ENCODE measurements at regions of chr3 and their contacts with region 1.

Region 1: GRCh38 chr3:48739955-48740823 is 23.2 kb upstream of the IP6K2 start:
- DNase-seq: peak; percentile 95
- H3K4me3 ChIP-seq: no peak overlapping the region
- H3K27ac ChIP-seq: peak overlapping the region; percentile 58 to 70 (median 68)
- H3K4me1 ChIP-seq: peaks cover 0 to 43% (median 30%) of the 10 kb centered on the region in 4 donors
- H3K27me3 ChIP-seq: no peaks in the 10 kb centered on the region
- CTCF ChIP-seq: peak; percentile 70 to 88 (median 82)
- EP300 ChIP-seq: no peak
- POLR2A ChIP-seq: no peak

Region 2: GRCh38 chr3:47701388-47701787 is 1038.8 kb before region 1 on chr3:
- intact Hi-C with region 1: no loop called
- DNase-seq: no peak
- H3K4me3 ChIP-seq: no peak overlapping the region
- H3K27ac ChIP-seq: no peak overlapping the region
- H3K4me1 ChIP-seq: peaks cover 0 to 4% (median 0%) of the 10 kb centered on the region in 4 donors
- H3K27me3 ChIP-seq: no peaks in the 10 kb centered on the region
- CTCF ChIP-seq: no peak
- EP300 ChIP-seq: no peak
- POLR2A ChIP-seq: no peak

Region 3: DNA sequence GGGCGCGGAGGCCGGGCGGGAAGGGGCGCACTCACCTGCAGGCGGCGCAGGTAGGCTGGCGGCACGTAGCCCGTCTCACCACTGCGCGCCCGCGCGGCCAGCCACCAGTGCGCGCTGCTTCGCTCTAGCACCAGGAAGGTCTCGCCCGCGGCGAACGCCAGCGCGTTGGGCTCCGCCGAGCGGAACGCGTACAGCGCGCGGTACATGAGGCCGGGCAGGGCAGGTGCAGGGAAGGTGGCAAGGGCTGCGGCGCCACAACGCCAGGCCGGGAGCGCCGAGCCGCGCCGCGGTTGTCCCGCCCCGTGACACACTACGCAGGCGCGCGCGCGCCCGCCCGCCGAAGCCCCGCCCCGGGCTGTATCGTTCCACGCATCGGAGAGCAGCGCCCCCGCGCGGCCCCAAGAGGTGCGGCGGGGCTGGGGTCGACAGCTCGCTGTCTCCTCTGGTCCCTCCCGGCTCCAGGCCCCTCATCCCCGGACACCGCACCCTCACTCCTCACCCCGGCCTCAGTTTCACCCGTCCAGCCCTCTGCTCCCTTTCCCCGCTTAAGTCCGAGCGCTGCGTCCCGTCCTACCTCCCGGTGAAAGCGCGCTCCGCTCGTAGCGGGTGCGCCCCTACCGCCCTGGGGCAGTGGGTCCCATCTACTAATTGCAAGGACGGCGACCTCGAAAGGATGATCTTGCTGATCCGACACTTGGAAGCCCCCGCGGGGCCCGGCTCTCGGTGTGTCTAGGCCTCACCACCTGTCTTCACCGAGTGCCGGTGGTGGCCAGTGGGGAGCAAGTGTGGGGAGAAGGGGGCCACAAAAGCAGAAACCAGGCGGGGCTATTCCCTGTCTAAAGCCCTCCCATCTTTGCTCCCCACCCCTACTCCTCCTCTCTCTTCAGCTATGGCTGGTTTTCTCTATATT is 54.3 kb before region 1 on chr3 and contains the start of gene NCKIPSD:
- intact Hi-C with region 1: loop called (anchors 2 kb)
- DNase-seq: peak; percentile 93
- H3K4me3 ChIP-seq: peak within 1 kb of the TSS; percentile 65 to 94 (median 80)
- H3K27ac ChIP-seq: peak within 1 kb of the TSS; percentile 77 to 85 (median 80)
- H3K4me1 ChIP-seq: peaks cover 0 to 45% (median 36%) of the 10 kb centered on the region in 4 donors
- H3K27me3 ChIP-seq: no peaks in the 10 kb centered on the region
- CTCF ChIP-seq: peak; percentile 56 to 89 (median 81)
- EP300 ChIP-seq: no peak
- POLR2A ChIP-seq: peak in 1 of 2 donors; percentile 30
- total RNA-seq, gene NCKIPSD: 7.7 to 29.3 (median 22.8) TPM

Region 4: GRCh38 chr3:48723725-48724124 is 16.5 kb before region 1 on chr3:
- intact Hi-C with region 1: no loop called
- DNase-seq: no peak
- H3K4me3 ChIP-seq: no peak overlapping the region
- H3K27ac ChIP-seq: no peak overlapping the region
- H3K4me1 ChIP-seq: no peaks in the 10 kb centered on the region
- H3K27me3 ChIP-seq: no peaks in the 10 kb centered on the region
- CTCF ChIP-seq: no peak
- EP300 ChIP-seq: no peak
- POLR2A ChIP-seq: no peak

Region 5: DNA sequence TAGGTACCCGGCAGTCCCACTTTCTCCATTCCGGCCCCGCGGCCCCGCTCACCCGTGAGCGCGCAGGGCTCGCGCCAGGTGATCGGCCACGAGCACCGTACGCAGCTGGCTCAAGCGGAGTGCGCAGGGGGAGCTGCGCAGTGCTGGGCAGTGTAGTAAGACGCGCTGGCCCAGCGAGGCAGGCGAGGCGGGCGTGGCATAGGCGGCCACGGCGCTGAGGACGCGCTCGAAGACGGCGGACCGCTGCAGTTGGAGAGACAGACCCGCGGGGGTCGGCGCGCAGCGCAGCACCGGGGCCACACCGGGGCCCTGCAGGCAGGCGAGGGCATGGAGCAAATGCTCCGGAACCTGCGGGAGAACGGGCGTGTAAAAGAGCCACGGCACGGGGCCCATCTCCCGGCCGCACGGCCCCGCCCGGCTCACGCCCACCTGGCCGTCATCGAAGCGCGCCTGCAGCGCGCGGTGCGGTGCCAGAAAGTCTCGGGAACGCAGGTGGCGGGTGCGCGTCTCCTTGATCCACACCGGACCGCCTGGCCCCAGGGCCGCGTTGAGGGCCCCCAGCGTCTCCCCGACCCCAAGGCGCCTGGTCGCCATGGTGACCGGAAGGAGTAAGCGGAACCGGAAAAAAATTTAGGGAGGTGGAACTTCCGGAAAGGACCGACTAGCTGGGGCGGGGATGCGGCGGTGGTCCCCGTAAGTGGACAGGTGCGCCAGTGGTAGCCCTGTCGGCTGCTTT is 277.9 kb after region 1 on chr3 and contains the start of gene DALRD3:
- intact Hi-C with region 1: no loop called
- DNase-seq: peak; percentile 81
- H3K4me3 ChIP-seq: peak within 1 kb of the TSS; percentile 72 to 81 (median 74)
- H3K27ac ChIP-seq: peak within 1 kb of the TSS; percentile 76 to 100 (median 82)
- H3K4me1 ChIP-seq: peaks cover 0 to 50% (median 40%) of the 10 kb centered on the region in 4 donors
- H3K27me3 ChIP-seq: no peaks in the 10 kb centered on the region
- CTCF ChIP-seq: no peak
- EP300 ChIP-seq: no peak
- POLR2A ChIP-seq: peak; percentile 51 to 62
- total RNA-seq, gene DALRD3: 11.8 to 35.5 (median 19.5) TPM

Measured in sigmoid colon (tissue), 7 donors.